ENCODE measurements at regions of chr6 and their contacts with region 1.

Region 1: GRCh38 chr6:36623547-36624459 is 29.6 kb downstream of the SRSF3 start:
- DNase-seq: peak; percentile 98
- H3K4me3 ChIP-seq: no peak overlapping the region
- H3K27ac ChIP-seq: peak overlapping the region; percentile 69
- H3K4me1 ChIP-seq: peaks cover 22% of the 10 kb centered on the region
- H3K27me3 ChIP-seq: no peaks in the 10 kb centered on the region
- CTCF ChIP-seq: peak; percentile 89

Region 2: DNA sequence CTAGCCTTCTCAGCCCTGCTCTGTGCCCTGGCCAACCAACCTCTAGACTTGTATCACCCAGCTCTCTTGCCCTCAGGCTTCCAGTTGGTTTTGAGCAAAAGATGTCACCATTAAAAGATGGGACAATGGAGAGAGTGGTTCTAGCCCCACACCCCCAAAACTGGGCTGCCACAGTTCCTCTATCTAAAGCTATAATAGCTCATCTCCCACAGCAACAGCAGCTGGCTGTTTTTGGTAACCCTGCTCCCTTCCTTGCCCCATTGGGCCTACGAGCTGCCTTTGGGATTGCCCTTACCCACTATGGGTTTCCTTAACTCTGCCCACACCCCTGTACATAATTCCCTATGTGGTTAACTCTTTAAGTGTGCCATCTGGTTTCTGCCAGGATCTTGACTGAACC is 37.2 kb before region 1 on chr6:
- intact Hi-C with region 1: no loop called
- DNase-seq: no peak
- H3K4me3 ChIP-seq: no peak overlapping the region
- H3K27ac ChIP-seq: no peak overlapping the region
- H3K4me1 ChIP-seq: no peaks in the 10 kb centered on the region
- H3K27me3 ChIP-seq: no peaks in the 10 kb centered on the region
- CTCF ChIP-seq: no peak

Region 3: GRCh38 chr6:36682328-36683144 is 58.7 kb after region 1 on chr6:
- intact Hi-C with region 1: loop called (anchors 2 kb)
- DNase-seq: peak; percentile 86
- H3K4me3 ChIP-seq: no peak overlapping the region
- H3K27ac ChIP-seq: peak overlapping the region; percentile 38
- H3K4me1 ChIP-seq: peaks cover 19% of the 10 kb centered on the region
- H3K27me3 ChIP-seq: no peaks in the 10 kb centered on the region
- CTCF ChIP-seq: no peak

Region 4: DNA sequence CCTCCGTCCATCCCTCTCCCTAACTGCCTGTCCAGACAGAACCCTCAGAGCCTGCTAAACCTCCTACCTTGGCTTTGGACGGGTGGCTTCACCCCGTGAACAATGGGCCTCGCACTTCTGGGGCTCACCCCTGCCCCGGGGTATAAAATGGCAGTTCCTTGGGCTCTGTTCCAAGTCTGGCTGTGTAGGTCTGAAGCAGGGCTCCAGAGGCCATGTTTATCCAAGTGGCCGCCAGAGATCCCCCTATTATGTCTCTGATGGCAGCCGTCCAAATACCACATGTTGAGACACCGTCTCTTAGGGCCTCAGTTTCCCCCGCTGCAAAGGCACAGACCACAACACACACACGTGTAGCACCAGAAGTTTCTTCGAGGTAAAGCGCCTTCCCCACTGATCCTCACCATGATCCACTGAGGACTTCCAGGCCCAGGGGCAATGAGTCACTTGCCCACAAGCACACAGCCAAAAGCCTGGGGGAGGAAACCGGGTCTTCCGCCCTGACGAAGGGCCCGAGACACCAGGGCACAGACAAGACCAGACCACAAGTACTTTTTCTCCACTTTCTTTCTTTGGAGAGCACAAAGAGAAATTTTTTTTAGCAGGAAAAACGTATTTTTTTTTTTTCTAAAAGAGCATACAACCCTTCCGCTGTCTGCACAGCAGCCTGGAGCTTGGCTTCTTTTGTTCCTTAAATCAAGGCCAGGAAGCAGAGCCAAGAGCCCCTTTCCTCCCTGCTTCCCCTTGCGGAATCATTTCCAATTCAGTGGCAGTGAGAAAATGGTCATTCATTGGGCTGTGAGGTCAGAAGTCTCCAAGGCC is 203.7 kb after region 1 on chr6:
- intact Hi-C with region 1: no loop called
- DNase-seq: no peak
- H3K4me3 ChIP-seq: no peak overlapping the region
- H3K27ac ChIP-seq: no peak overlapping the region
- H3K4me1 ChIP-seq: peaks cover 5% of the 10 kb centered on the region
- H3K27me3 ChIP-seq: no peaks in the 10 kb centered on the region
- CTCF ChIP-seq: no peak